Psoas muscle (tissue), 8 donors: ENCODE measurements at regions of chr19 and their contacts with region 1.

Region 1: GRCh38 chr19:12847159-12848139 is 9.1 kb downstream of the MAST1 start:
- DNase-seq: peak; percentile 87 to 93
- ATAC-seq: peak; percentile 97 to 100 (median 98)
- H3K4me3 ChIP-seq: peak overlapping the region; percentile 47
- H3K27ac ChIP-seq: no peak overlapping the region
- H3K4me1 ChIP-seq: peaks cover 6% of the 10 kb centered on the region
- H3K27me3 ChIP-seq: peaks cover 0 to 21% (median 2%) of the 10 kb centered on the region in 3 donors
- CTCF ChIP-seq: peak; percentile 100

Region 2: DNA sequence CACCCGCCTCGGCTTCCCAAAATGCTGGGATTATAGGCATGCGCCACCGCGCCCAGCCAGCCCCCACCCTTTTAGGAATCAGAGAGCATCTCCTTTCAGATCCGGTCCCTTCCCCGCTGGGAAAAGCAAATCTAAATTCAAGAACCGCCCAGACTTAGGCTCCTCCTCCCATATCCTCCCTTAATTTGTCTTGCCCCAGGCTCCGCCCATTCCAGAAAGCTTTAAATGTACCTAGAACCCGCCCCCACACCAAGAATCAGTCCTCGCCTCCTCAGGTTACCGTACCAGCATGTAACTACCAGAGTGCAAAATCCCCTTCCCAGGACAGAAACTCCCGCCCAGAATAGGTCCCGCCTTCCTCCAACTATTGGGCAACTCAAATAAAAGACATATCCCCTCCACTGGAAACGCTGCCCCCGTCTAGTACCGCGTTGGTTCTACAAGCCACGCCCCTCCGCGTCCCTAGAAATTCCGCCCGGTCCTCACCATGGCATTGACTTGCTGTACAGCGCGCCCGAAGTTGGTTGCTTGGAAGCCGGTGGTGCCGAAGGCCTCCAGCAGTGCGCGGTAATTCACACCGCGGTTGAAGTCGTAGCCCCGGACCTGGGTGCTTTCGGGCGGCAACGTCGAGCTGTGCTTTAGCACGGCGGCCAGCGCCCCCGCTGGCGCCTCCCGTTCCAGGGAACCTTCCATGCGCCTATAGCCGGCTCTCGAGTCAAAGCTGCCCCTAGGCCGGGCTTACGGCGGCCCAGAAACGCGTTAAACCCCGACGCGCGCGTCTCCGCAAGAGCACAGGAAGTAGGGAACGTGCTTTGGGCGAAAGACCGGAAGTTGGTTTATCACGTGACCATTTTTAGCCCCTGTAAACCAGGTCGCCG is 166.1 kb before region 1 on chr19 and contains the start of gene DHPS:
- intact Hi-C with region 1: loop called in 1 of 2 experiments (anchors 5 kb)
- DNase-seq: peak; percentile 90 to 91
- ATAC-seq: peak; percentile 91 to 94 (median 91)
- H3K4me3 ChIP-seq: peak within 1 kb of the TSS; percentile 76
- H3K27ac ChIP-seq: peak within 1 kb of the TSS; percentile 96
- H3K4me1 ChIP-seq: peaks cover 3% of the 10 kb centered on the region
- H3K27me3 ChIP-seq: no peaks in the 10 kb centered on the region
- CTCF ChIP-seq: no peak
- total RNA-seq, gene DHPS: 75.6 to 86.7 (median 82.9) TPM

Region 3: GRCh38 chr19:12722566-12723380 is 124.7 kb before region 1 on chr19:
- intact Hi-C with region 1: loop called in 1 of 2 experiments (anchors 5 kb)
- DNase-seq: peak; percentile 97 to 98
- ATAC-seq: peak; percentile 93 to 94 (median 93)
- H3K4me3 ChIP-seq: peak overlapping the region; percentile 87
- H3K27ac ChIP-seq: peak overlapping the region; percentile 92
- H3K4me1 ChIP-seq: peaks cover 27% of the 10 kb centered on the region
- H3K27me3 ChIP-seq: no peaks in the 10 kb centered on the region
- CTCF ChIP-seq: no peak

Region 4: DNA sequence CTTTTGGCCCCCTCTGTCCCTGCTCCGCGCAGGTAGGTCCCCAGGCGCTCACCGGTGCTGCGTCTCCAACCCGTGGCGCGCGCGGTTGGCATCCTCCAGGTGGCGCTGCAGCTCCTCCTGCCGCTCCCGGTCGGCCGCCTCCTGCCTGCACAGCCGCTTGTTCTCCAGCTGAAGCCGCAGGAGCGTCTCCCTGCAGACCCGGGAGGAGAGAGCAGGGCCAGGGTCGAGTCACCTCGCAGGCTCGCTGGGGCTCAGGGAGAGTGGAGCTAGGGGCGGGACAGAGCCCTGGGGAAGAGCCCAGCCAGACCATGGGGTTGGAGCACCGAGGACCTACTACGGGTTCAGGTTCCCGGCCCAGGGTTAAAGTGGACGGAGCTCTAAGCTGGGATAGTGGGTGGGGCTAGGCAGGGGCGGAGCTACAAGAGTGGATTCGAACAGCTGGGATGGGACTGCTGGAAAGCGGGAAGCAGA is 81.4 kb before region 1 on chr19:
- intact Hi-C with region 1: loop called in 1 of 2 experiments (anchors 5 kb)
- DNase-seq: peak; percentile 76 to 89
- ATAC-seq: peak; percentile 71 to 86 (median 82)
- H3K4me3 ChIP-seq: peak overlapping the region; percentile 52
- H3K27ac ChIP-seq: peak overlapping the region; percentile 46
- H3K4me1 ChIP-seq: no peaks in the 10 kb centered on the region
- H3K27me3 ChIP-seq: no peaks in the 10 kb centered on the region
- CTCF ChIP-seq: peak; percentile 75

Region 5: GRCh38 chr19:12777217-12778016 is 70.0 kb before region 1 on chr19:
- intact Hi-C with region 1: loop called in 1 of 2 experiments (anchors 2 kb)
- DNase-seq: peak; percentile 84 to 88
- ATAC-seq: peak; percentile 51 to 70 (median 60)
- H3K4me3 ChIP-seq: peak overlapping the region; percentile 86
- H3K27ac ChIP-seq: peak overlapping the region; percentile 88
- H3K4me1 ChIP-seq: peaks cover 43% of the 10 kb centered on the region
- H3K27me3 ChIP-seq: no peaks in the 10 kb centered on the region
- CTCF ChIP-seq: peak; percentile 94

Region 6: DNA sequence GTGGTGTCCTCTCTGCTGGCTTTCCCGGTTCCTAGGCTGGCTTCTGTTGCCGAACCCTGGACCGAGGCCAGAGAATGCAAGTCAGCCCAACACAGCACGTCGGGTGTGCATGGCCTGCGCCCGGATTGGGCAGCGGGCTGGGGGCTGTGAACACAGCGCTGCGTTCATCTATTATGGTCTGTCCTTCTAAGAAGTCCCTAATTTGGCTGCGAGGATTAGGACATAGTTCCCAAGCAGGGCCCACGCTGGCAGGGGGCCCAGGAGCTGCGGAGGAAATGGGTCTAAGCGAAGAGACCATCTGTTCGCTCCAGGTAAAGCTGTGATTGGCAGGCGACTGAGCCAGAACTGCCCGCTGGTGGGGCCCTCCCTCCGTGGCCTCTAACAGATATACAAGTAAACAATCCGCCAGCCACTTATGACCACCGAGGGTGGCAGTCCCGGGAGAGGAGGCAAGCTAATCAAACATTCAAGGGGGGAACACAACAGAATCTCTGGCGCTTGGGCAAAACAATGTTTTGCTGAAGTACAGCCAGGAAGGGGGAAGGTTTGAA is 65.6 kb after region 1 on chr19:
- intact Hi-C with region 1: no loop called
- DNase-seq: peak; percentile 65 to 78
- ATAC-seq: peak; percentile 76 to 90 (median 82)
- H3K4me3 ChIP-seq: peak overlapping the region; percentile 49
- H3K27ac ChIP-seq: peak overlapping the region; percentile 17
- H3K4me1 ChIP-seq: peaks cover 9% of the 10 kb centered on the region
- H3K27me3 ChIP-seq: no peaks in the 10 kb centered on the region
- CTCF ChIP-seq: no peak